WTC11 (cell line): ENCODE measurements at regions of chr6 and their contacts with region 1.

Region 1: DNA sequence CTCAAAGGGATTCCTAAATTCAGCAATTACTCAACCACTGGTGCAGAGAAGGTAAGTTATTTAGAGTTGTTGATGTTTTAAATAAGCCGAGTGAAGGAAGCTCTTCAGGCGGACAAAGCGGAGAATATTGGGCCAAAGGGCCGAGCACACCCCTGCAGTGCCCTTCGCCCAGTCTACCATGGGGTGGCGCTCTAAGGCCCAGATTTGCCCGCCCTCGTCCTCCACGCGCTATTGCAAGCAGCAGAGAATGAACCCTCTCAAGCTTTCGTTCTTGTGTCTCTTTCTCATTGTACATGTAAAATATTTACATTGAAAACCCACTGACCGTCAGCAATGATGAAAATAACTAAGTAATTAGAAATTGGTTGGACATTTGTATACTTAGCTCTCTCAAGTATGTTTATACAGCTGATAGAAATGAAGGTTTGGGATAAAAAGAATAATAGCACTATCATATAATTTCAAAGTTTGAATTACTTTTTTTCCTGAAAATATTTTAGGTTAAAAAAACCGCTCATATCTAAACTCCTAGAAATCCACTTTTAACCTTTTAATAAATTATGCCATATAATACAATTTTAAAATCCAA is 195.0 kb upstream of the CEP162 start:
- DNase-seq: peak; percentile 82
- ATAC-seq: peak; percentile 98
- H3K4me3 Mint-ChIP-seq: no peak overlapping the region
- H3K27ac Mint-ChIP-seq: no peak overlapping the region
- H3K4me1 Mint-ChIP-seq: peaks cover 26% of the 10 kb centered on the region
- H3K27me3 Mint-ChIP-seq: no peaks in the 10 kb centered on the region
- CTCF ChIP-seq: peak; percentile 95

Region 2: DNA sequence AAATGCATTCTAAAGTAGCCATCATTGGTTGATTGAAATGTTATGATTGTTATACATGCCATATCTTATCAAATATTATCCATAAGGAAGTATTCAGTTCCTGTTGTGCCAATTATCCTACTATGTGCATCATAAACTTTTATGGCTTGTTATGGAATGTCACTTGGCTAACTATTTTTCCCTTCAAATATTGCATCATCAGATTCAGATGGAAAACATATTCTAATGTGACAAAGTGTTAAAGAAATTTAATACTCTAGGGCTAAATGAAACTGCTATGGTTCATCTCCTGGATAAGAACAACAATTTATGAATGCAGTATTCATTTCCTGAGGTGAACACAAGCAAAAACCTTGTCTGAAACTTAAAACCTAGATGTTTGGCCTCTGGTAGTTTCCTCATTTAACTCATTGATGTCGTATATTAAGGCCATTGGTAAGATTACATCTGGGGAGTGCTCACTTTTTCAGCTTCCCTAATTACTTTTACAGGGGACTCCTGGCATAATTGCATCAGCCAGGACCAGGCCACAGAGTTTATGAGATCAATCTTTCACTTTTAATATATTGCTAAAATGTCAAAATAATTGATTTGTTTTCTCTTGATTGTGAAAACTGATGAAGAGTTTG is 60.2 kb before region 1 on chr6:
- CTCF ChIA-PET with region 1: no interaction called
- POLR2A ChIA-PET with region 1: no interaction called
- DNase-seq: no peak
- ATAC-seq: no peak
- H3K4me3 Mint-ChIP-seq: no peak overlapping the region
- H3K27ac Mint-ChIP-seq: no peak overlapping the region
- H3K4me1 Mint-ChIP-seq: no peaks in the 10 kb centered on the region
- H3K27me3 Mint-ChIP-seq: no peaks in the 10 kb centered on the region; the same call in 1 of the 2 replicates
- CTCF ChIP-seq: no peak

Region 3: GRCh38 chr6:84411060-84411629 is 11.3 kb before region 1 on chr6:
- CTCF ChIA-PET with region 1: interaction called, 14 read pairs
- POLR2A ChIA-PET with region 1: no interaction called
- DNase-seq: no peak
- ATAC-seq: no peak
- H3K4me3 Mint-ChIP-seq: no peak overlapping the region
- H3K27ac Mint-ChIP-seq: no peak overlapping the region
- H3K4me1 Mint-ChIP-seq: no peaks in the 10 kb centered on the region
- H3K27me3 Mint-ChIP-seq: no peaks in the 10 kb centered on the region
- CTCF ChIP-seq: no peak

Region 4: DNA sequence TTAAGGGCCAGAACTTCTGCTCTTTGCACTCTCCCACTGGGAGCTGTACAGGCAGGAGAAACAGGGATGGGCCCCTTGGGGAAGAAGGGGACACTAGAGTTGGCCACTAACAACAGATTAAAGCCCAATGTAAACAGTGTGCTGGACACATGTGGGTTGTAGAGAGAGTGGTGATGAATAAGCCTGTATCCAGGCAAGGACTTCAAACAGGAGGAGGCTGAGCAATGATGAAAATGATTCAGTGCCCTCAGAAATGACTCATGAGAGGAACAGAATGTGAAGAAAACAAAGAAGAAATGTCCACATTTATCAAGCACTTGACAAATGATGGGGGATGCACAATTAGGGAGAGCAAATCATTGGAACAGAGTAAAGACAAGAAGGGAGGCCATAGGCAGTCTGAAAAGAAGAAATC is 99.7 kb after region 1 on chr6:
- CTCF ChIA-PET with region 1: no interaction called
- POLR2A ChIA-PET with region 1: no interaction called
- DNase-seq: no peak
- ATAC-seq: no peak
- H3K4me3 Mint-ChIP-seq: no peak overlapping the region
- H3K27ac Mint-ChIP-seq: no peak overlapping the region
- H3K4me1 Mint-ChIP-seq: peaks cover 5% of the 10 kb centered on the region
- H3K27me3 Mint-ChIP-seq: peaks cover 4% of the 10 kb centered on the region; the same call in 1 of the 2 replicates
- CTCF ChIP-seq: no peak

Region 5: GRCh38 chr6:84549883-84550282 is 127.4 kb after region 1 on chr6:
- CTCF ChIA-PET with region 1: interaction called, 11 read pairs
- POLR2A ChIA-PET with region 1: no interaction called
- DNase-seq: peak; percentile 46
- ATAC-seq: peak; percentile 90
- H3K4me3 Mint-ChIP-seq: no peak overlapping the region
- H3K27ac Mint-ChIP-seq: no peak overlapping the region
- H3K4me1 Mint-ChIP-seq: no peaks in the 10 kb centered on the region
- H3K27me3 Mint-ChIP-seq: no peaks in the 10 kb centered on the region
- CTCF ChIP-seq: no peak

Region 6: GRCh38 chr6:84657486-84657885 is 235.0 kb after region 1 on chr6:
- CTCF ChIA-PET with region 1: no interaction called
- POLR2A ChIA-PET with region 1: no interaction called
- DNase-seq: no peak
- ATAC-seq: no peak
- H3K4me3 Mint-ChIP-seq: no peak overlapping the region
- H3K27ac Mint-ChIP-seq: no peak overlapping the region
- H3K4me1 Mint-ChIP-seq: no peaks in the 10 kb centered on the region
- H3K27me3 Mint-ChIP-seq: no peaks in the 10 kb centered on the region
- CTCF ChIP-seq: no peak

Region 7: GRCh38 chr6:84685983-84686584 is 263.6 kb after region 1 on chr6:
- CTCF ChIA-PET with region 1: interaction called, 10 read pairs
- POLR2A ChIA-PET with region 1: no interaction called
- DNase-seq: peak; percentile 24
- ATAC-seq: peak; percentile 79; the same call in 1 of the 2 replicates
- H3K4me3 Mint-ChIP-seq: no peak overlapping the region
- H3K27ac Mint-ChIP-seq: no peak overlapping the region
- H3K4me1 Mint-ChIP-seq: peaks cover 3% of the 10 kb centered on the region; the same call in 1 of the 2 replicates
- H3K27me3 Mint-ChIP-seq: no peaks in the 10 kb centered on the region
- CTCF ChIP-seq: peak; percentile 72

Region 8: DNA sequence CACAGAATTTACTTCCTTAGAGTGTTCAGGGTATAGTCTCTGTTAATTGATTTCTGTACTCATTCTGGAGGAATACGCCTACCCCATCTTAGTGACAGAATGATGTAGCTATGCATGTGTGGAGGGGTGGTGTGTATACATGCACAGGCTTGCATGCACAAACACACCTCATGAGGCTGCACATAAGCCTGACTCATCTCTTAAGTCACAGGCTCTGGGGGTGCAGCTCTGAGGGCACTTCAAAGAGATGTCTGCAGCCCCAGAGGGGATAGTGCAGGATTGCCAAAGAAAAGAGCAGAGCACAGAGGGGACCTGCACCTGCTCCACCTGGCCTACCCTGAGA is 317.4 kb after region 1 on chr6:
- CTCF ChIA-PET with region 1: no interaction called
- POLR2A ChIA-PET with region 1: no interaction called
- DNase-seq: no peak
- ATAC-seq: no peak
- H3K4me3 Mint-ChIP-seq: no peak overlapping the region
- H3K27ac Mint-ChIP-seq: no peak overlapping the region
- H3K4me1 Mint-ChIP-seq: no peaks in the 10 kb centered on the region
- H3K27me3 Mint-ChIP-seq: no peaks in the 10 kb centered on the region; the same call in 1 of the 2 replicates
- CTCF ChIP-seq: no peak

Region 9: DNA sequence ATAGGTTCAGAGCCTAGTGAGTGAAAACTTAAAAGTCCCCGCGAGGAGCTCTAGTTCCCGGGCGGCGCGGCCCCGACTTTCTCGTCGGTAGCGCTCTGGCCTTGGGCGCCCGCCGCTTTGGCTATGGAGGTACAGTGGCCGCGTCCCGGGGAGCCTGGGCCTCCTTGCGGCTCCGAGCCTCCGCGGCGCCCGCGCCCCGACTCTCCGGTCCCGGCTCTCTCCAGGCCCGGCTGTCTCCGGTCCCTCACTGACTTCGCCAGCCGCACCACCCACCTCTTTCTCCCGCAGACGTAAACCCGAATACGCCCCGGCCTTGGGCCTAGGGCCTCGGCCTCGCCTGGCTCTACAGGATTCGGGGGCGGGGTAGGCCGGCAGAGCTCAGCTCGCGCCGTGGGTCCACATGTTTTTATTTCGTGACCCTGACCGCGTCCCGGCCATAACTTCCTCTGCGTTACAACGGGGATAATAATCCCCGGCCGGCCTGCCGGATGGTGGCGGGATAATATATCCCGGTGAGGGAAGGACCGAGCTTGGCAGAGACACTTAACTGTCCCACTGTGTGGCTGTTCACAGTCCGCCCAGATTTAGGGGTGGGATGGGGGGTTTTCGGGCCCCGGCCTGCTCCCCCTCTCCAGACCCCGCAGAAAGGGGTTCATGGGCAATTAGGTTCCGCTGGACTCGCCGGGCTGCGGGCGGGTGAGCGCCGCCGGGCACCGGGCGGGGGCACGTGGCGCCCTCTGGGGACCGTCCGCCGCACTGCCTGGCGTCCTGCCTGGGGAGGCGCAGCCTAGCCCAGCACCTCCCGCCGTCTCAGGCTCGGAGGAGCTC is 351.9 kb after region 1 on chr6:
- CTCF ChIA-PET with region 1: interaction called, 25 read pairs
- POLR2A ChIA-PET with region 1: no interaction called
- DNase-seq: peak; percentile 81
- ATAC-seq: peak; percentile 92
- H3K4me3 Mint-ChIP-seq: peak overlapping the region; percentile 72
- H3K27ac Mint-ChIP-seq: no peak overlapping the region
- H3K4me1 Mint-ChIP-seq: peaks cover 19% of the 10 kb centered on the region
- H3K27me3 Mint-ChIP-seq: peaks cover 100% of the 10 kb centered on the region
- CTCF ChIP-seq: peak; percentile 75